ENCODE measurements at regions of chr9 and their contacts with region 1.

Region 1: GRCh38 chr9:113446323-113446740 is 17.2 kb upstream of the RGS3 start:
- DNase-seq: no peak
- ATAC-seq: peak; percentile 31
- H3K4me3 Mint-ChIP-seq: no peak overlapping the region
- H3K27ac Mint-ChIP-seq: no peak overlapping the region
- H3K4me1 Mint-ChIP-seq: no peaks in the 10 kb centered on the region
- H3K27me3 Mint-ChIP-seq: no peaks in the 10 kb centered on the region
- CTCF ChIP-seq: no peak

Region 2: DNA sequence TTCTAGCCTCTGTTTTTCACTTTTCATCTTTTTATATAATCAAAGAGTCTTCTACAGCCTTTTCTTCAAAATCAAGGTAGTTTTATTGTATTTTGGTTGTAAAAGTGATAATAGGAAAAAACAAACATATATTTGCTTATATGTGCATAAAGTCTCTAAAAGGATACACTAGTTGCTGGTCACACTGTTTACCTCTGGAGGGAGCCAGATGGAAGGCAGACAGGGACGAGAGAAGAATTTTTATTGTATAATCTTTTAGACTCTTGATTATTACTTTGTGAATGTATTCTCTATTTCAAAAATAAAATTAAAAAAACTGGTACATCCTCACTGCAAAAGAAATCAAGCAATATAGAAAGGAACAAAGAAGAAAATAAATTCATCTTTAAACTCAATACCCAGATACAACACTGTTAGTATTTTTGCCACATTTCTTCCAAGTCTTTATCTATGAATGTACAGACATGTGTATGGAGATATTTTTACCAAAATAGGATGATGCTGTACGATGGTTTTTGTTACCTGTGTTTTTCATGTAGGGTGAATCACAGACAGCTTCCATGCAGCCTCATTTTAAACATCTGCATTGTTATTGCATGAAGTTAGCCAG is 137.0 kb before region 1 on chr9:
- CTCF ChIA-PET with region 1: interaction called, 3 read pairs
- POLR2A ChIA-PET with region 1: no interaction called
- intact Hi-C with region 1: loop called (anchors 2 kb)
- DNase-seq: no peak
- ATAC-seq: no peak
- H3K4me3 Mint-ChIP-seq: no peak overlapping the region
- H3K27ac Mint-ChIP-seq: no peak overlapping the region
- H3K4me1 Mint-ChIP-seq: no peaks in the 10 kb centered on the region
- H3K27me3 Mint-ChIP-seq: peaks cover 2% of the 10 kb centered on the region
- CTCF ChIP-seq: no peak

Region 3: GRCh38 chr9:113349445-113350094 is 96.8 kb before region 1 on chr9 and contains the start of gene BSPRY:
- CTCF ChIA-PET with region 1: no interaction called
- POLR2A ChIA-PET with region 1: no interaction called
- intact Hi-C with region 1: no loop called
- DNase-seq: peak; percentile 39
- ATAC-seq: peak; percentile 59
- H3K4me3 Mint-ChIP-seq: peak within 1 kb of the TSS; percentile 82
- H3K27ac Mint-ChIP-seq: peak within 1 kb of the TSS; percentile 30
- H3K4me1 Mint-ChIP-seq: peaks cover 20% of the 10 kb centered on the region
- H3K27me3 Mint-ChIP-seq: peaks cover 7% of the 10 kb centered on the region
- CTCF ChIP-seq: no peak
- total RNA-seq, gene BSPRY: 1.1 and 1.3 TPM in 2 replicates

Region 4: DNA sequence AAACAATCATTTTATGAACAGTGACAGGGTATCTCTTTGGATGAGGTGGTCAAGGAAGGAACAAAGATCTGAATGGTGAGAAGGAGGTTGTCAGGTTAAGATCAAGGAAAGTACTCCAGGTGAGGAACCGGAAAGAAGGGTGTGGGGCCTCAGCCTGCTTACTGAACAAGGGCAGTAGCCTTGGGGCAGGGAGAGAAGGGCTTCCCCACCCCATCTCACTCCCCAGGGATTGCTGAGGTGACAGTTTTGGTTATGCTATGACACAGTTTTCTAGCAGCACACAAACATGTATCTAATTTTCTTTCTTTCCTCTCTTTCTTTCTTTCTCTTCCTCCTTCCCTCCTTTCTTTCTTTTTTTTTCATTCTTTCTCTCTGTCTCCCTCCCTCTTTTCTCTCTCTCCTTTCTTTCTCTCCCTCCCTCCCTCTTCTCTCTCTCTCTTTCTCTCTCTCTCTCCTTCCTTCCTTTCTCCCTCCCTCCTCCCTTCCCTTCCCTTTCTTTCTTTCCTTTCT is 65.4 kb before region 1 on chr9:
- CTCF ChIA-PET with region 1: no interaction called
- POLR2A ChIA-PET with region 1: no interaction called
- intact Hi-C with region 1: no loop called
- DNase-seq: no peak
- ATAC-seq: peak; percentile 35
- H3K4me3 Mint-ChIP-seq: peak overlapping the region; percentile 3
- H3K27ac Mint-ChIP-seq: peak overlapping the region; percentile 59
- H3K4me1 Mint-ChIP-seq: peaks cover 19% of the 10 kb centered on the region
- H3K27me3 Mint-ChIP-seq: no peaks in the 10 kb centered on the region
- CTCF ChIP-seq: no peak

Region 5: GRCh38 chr9:113516840-113517577 is 70.7 kb after region 1 on chr9:
- CTCF ChIA-PET with region 1: interaction called, 3 read pairs
- POLR2A ChIA-PET with region 1: no interaction called
- intact Hi-C with region 1: loop called (anchors 2 kb)
- DNase-seq: peak; percentile 26
- ATAC-seq: peak; percentile 95
- H3K4me3 Mint-ChIP-seq: peak overlapping the region; percentile 62
- H3K27ac Mint-ChIP-seq: peak overlapping the region; percentile 83
- H3K4me1 Mint-ChIP-seq: peaks cover 29% of the 10 kb centered on the region
- H3K27me3 Mint-ChIP-seq: no peaks in the 10 kb centered on the region
- CTCF ChIP-seq: no peak

Region 6: GRCh38 chr9:113591001-113591898 is 144.9 kb after region 1 on chr9:
- CTCF ChIA-PET with region 1: interaction called, 75 read pairs
- POLR2A ChIA-PET with region 1: no interaction called
- intact Hi-C with region 1: loop called (anchors 2 kb)
- DNase-seq: peak; percentile 67
- ATAC-seq: peak; percentile 71
- H3K4me3 Mint-ChIP-seq: no peak overlapping the region
- H3K27ac Mint-ChIP-seq: no peak overlapping the region
- H3K4me1 Mint-ChIP-seq: peaks cover 14% of the 10 kb centered on the region
- H3K27me3 Mint-ChIP-seq: no peaks in the 10 kb centered on the region
- CTCF ChIP-seq: no peak

Measured in activated B cell treated with CpG ODN at 0.5 μM for 24 hours (primary cell).